ENCODE measurements at regions of chr3 and their contacts with region 1.

Region 1: GRCh38 chr3:49133226-49133951 is 539 bp upstream of the LAMB2 start:
- DNase-seq: peak; percentile 92

Region 2: DNA sequence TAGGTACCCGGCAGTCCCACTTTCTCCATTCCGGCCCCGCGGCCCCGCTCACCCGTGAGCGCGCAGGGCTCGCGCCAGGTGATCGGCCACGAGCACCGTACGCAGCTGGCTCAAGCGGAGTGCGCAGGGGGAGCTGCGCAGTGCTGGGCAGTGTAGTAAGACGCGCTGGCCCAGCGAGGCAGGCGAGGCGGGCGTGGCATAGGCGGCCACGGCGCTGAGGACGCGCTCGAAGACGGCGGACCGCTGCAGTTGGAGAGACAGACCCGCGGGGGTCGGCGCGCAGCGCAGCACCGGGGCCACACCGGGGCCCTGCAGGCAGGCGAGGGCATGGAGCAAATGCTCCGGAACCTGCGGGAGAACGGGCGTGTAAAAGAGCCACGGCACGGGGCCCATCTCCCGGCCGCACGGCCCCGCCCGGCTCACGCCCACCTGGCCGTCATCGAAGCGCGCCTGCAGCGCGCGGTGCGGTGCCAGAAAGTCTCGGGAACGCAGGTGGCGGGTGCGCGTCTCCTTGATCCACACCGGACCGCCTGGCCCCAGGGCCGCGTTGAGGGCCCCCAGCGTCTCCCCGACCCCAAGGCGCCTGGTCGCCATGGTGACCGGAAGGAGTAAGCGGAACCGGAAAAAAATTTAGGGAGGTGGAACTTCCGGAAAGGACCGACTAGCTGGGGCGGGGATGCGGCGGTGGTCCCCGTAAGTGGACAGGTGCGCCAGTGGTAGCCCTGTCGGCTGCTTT is 115.2 kb before region 1 on chr3 and contains the start of gene DALRD3:
- intact Hi-C with region 1: loop called (anchors 5 kb)
- DNase-seq: peak; percentile 85
- total RNA-seq, gene DALRD3: 13.6 TPM

Region 3: DNA sequence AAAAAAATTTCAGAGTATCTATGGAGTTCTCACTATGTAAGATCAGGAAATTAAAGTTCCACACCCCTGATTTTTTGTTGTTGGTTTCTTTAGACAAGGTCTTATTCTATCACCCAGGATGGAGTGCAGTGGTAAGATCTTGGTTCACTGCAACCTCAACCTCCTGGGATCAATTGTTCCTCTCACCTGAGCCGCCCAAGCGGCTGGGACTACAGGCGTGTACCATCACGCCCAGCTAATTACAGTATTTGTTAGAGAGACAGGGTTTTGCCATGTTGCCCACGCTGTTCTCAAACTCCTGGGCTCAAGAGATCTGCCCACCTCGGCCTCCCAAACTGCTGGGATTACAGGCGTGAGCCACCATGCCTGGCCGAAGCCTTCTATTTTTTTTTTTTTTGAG is 52.0 kb before region 1 on chr3:
- intact Hi-C with region 1: no loop called
- DNase-seq: no peak

Region 4: GRCh38 chr3:49093853-49094767 is 39.3 kb before region 1 on chr3 and contains the start of gene QRICH1:
- intact Hi-C with region 1: loop called (anchors 1 kb)
- DNase-seq: peak; percentile 98
- total RNA-seq, gene QRICH1: 54.5 TPM

Region 5: GRCh38 chr3:49104483-49105291 is 28.7 kb before region 1 on chr3 and contains the start of gene QARS1:
- intact Hi-C with region 1: loop called (anchors 2 kb)
- DNase-seq: peak; percentile 96
- total RNA-seq, gene QARS1: 149 TPM

Region 6: GRCh38 chr3:49276475-49277382 is 143.3 kb after region 1 on chr3 and contains the start of gene C3orf62:
- intact Hi-C with region 1: loop called (anchors 5 kb)
- DNase-seq: peak; percentile 96
- total RNA-seq, gene C3orf62: 2.9 TPM

Measured in cardiac septum (tissue), 1 donor.